ENCODE measurements at regions of chr5 and their contacts with region 1.

Region 1: DNA sequence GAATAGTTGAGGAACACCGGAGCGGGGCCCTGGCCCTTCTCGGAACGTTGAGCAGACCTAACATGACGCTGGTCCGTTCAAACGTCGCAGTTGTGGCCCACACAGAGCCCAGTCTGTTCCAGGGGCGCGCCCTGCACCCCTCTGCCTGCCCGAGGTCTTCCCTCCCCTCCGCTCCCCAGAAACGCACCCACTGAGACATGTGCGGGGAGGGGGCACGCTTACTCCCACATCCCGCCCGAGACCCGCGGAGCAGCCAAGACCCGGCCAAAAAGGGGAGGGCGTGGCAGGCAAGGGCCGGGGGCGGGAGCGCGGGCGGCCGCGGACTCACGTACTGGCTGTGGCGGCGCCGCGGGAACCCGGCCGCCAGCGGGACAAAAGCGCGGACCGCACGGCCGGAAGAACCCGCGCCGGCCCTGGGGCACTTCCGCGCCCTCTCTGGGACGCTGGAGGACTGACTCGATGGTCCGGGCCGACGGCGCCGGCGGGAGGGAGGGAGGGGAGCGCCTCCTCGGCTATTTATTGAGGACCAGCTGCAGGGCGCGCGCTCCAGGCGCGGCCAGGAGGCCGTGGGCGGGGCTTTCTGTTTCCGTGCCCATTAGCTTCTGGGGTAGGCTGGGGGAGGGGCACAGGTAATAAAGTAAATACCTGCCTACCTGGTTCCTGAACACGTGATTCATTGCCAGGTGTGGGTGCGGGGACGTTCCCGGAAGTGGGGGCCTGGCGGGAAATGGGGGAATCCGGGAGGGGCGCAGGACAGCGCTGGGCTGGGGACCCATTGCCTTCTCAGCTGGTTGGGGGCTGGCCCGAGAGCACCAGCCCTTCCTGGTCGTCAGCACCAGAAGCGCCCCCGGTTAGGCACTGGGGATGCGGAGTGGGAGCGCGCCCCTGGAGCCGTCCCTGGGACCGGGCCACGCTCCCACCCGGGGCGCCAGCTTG is at the start of gene ZFP62:
- DNase-seq: peak; percentile 86
- H3K4me3 Mint-ChIP-seq: peak within 1 kb of the TSS; percentile 95
- H3K27ac Mint-ChIP-seq: peak within 1 kb of the TSS; percentile 89
- H3K4me1 Mint-ChIP-seq: peaks cover 19% of the 10 kb centered on the region
- H3K27me3 Mint-ChIP-seq: no peaks in the 10 kb centered on the region
- total RNA-seq, gene ZFP62: 21.5 to 23.6 TPM

Region 2: DNA sequence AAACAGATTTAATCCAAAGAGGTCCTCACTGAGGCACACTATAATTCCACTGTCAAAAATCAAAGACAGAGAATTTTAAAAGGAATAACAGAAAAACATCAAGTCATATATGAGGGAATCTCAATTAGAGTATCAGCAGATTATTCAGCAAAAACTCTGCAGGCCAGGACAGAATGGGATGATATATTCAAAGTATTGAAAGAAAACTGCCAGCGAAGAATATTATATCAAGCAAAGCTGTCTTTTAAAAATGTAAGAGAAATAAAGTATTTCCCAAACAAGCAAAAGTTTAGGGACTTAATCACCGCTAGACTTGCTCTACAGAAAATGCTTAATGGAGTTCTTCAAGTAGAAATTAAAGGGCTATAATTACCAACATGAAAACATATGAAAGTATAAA is 105.6 kb before region 1 on chr5:
- CTCF ChIA-PET with region 1: no interaction called
- intact Hi-C with region 1: no loop called
- DNase-seq: no peak
- H3K4me3 Mint-ChIP-seq: no peak overlapping the region
- H3K27ac Mint-ChIP-seq: no peak overlapping the region
- H3K4me1 Mint-ChIP-seq: no peaks in the 10 kb centered on the region
- H3K27me3 Mint-ChIP-seq: peaks cover 15% of the 10 kb centered on the region

Region 3: GRCh38 chr5:180784497-180785097 is 76.6 kb before region 1 on chr5:
- CTCF ChIA-PET with region 1: interaction called, 3 read pairs
- intact Hi-C with region 1: loop called (anchors 2 kb)
- DNase-seq: peak; percentile 89
- H3K4me3 Mint-ChIP-seq: no peak overlapping the region
- H3K27ac Mint-ChIP-seq: no peak overlapping the region
- H3K4me1 Mint-ChIP-seq: peaks cover 20% of the 10 kb centered on the region
- H3K27me3 Mint-ChIP-seq: no peaks in the 10 kb centered on the region

Region 4: DNA sequence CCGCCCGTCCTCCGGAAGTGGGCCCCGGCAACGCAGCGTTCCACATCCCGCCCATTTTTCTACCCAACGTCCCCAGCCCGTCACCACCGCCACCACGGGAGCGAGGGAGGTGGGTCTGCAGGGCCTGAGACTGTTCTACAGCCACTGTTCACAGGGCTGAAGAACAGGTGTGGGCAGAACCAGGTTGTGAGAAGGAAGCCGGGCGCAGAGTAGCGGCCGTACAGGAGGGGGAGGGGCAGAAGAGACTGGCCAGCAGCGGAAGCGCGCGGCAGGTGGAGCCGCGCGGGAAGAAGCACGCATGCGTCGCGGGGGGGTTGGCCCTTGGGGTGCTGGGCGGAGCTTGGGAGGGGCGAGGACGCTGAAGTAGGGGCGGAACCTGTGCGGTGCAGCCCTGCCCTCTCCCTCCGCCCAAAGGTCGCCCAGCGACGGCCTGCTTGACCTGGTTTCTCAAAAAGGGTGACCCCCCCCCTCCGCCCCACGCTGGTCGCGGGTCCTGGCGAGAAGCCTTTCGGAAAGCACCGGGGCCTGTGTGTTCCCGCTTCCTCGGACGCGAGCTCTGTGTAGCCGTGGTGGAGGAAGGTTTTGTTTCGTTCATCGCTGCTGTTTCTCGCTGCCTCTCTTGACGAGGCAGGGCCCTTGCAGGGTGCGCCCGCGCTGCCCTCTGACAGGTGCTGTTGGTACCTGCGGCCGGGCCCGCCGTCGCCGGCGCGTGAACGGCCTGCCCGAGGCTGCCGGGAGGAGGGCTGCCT is 50.8 kb before region 1 on chr5:
- CTCF ChIA-PET with region 1: no interaction called
- intact Hi-C with region 1: loop called (anchors 1 kb)
- DNase-seq: peak; percentile 96
- H3K4me3 Mint-ChIP-seq: peak overlapping the region; percentile 98
- H3K27ac Mint-ChIP-seq: peak overlapping the region; percentile 99
- H3K4me1 Mint-ChIP-seq: peaks cover 69% of the 10 kb centered on the region
- H3K27me3 Mint-ChIP-seq: no peaks in the 10 kb centered on the region

Region 5: GRCh38 chr5:180908998-180909731 is 48.0 kb after region 1 on chr5:
- CTCF ChIA-PET with region 1: no interaction called
- intact Hi-C with region 1: no loop called
- DNase-seq: peak; percentile 8
- H3K4me3 Mint-ChIP-seq: no peak overlapping the region
- H3K27ac Mint-ChIP-seq: no peak overlapping the region
- H3K4me1 Mint-ChIP-seq: no peaks in the 10 kb centered on the region
- H3K27me3 Mint-ChIP-seq: peaks cover 10% of the 10 kb centered on the region

Region 6: GRCh38 chr5:181167814-181168488 is 306.8 kb after region 1 on chr5:
- CTCF ChIA-PET with region 1: no interaction called
- intact Hi-C with region 1: loop called (anchors 2 kb)
- DNase-seq: peak; percentile 70
- H3K4me3 Mint-ChIP-seq: peak overlapping the region; percentile 36
- H3K27ac Mint-ChIP-seq: no peak overlapping the region
- H3K4me1 Mint-ChIP-seq: peaks cover 74% of the 10 kb centered on the region
- H3K27me3 Mint-ChIP-seq: peaks cover 74% of the 10 kb centered on the region

Region 7: DNA sequence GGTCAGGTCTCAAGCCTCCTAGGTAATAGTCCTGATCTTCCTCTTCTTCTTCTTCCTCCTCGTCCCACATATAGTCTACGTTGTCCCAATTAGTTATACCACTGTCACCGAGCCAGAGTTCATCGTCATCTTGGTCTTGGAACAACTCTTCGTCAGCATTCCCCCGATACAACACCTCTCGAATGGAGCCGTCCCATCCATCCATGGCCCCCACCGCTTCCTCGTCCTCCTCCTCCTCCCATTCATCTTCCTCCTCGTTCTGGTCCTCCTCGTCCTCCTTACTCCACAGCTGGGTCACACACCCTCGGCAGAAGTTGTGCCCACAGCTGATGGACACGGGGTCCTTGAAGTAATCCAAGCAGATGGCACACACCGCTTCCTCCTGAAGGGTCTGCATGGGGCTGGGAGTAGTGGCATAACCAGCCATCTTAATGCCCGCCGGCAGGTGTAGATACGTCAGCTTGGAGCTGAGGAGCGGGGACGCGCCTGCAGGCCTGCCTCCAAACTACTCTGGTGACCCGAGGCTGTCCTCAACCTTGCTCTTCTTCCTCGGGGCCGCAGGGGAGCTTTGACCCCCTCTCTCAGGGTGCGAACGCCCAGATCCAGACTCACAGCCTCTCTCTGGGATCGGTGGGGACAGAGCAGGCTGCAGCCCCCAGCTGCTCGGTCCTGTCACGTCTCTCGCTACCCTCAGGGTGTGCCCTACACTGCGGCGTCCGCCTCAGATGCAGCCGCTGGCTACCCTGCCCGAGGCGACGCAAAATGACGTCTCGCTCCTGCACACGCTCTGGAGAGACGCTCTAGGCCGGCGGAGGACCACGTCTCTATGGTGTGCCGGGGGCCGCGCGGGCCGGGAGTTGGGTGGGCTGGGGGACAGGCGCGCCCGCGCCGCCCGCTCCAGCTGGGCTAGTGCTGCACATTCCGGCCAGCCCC is 399.5 kb after region 1 on chr5 and contains the start of gene TRIM52:
- CTCF ChIA-PET with region 1: no interaction called
- intact Hi-C with region 1: loop called (anchors 5 kb)
- DNase-seq: peak; percentile 91
- H3K4me3 Mint-ChIP-seq: peak within 1 kb of the TSS; percentile 92
- H3K27ac Mint-ChIP-seq: peak within 1 kb of the TSS; percentile 94
- H3K4me1 Mint-ChIP-seq: peaks cover 37% of the 10 kb centered on the region
- H3K27me3 Mint-ChIP-seq: no peaks in the 10 kb centered on the region
- total RNA-seq, gene TRIM52: 10.5 to 10.9 TPM

Measured in activated naive CD4-positive, alpha-beta T cell treated with anti-CD3 and anti-CD28 coated beads for 36 hours (primary cell).